ENCODE measurements at regions of chr7 and their contacts with region 1.

Region 1: DNA sequence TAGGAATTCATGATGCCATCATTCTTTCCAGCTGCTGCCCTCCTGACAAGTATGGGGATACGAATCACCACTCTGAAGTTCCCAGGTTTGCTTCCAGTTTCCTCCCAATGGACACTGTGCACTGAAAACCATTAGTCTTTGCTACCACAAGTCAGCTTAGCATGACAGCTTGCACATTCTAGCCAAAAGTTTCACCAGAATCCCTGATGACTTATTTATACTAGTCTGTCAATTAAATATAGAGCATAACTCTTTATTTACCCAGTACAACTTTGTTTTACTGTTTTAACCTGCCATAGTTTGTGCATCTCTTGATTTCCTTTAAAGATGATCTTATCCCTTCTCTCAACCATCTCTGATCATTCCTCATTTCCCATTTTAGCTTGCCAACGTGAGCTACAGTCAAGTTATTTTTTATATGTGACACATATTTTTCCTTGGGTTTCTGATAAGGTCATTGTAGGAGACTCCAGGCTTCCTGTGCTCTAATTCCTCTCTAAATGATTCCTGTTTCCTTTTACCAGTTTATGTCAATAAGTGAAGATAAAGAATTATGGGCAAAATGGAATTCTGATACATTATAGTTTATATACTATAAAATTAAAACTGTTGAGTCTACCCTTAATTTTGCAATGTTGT is 167.5 kb upstream of the MEOX2 start:
- DNase-seq: no peak
- H3K4me3 ChIP-seq: no peak overlapping the region
- CTCF ChIP-seq: no peak
- POLR2A ChIP-seq: no peak

Region 2: GRCh38 chr7:15914611-15915010 is 60.7 kb after region 1 on chr7:
- intact Hi-C with region 1: loop called (anchors 5 kb)
- DNase-seq: no peak
- H3K4me3 ChIP-seq: no peak overlapping the region
- CTCF ChIP-seq: no peak
- POLR2A ChIP-seq: no peak